Stomach (tissue), 19 donors: ENCODE measurements at regions of chr1 and their contacts with region 1.

Region 1: GRCh38 chr1:66452162-66452561 is 81.8 kb upstream of the SGIP1 start:
- DNase-seq: no peak
- H3K4me3 ChIP-seq: no peak overlapping the region
- H3K27ac ChIP-seq: no peak overlapping the region
- H3K4me1 ChIP-seq: peaks cover 0 to 21% (median 0%) of the 10 kb centered on the region in 4 donors
- H3K27me3 ChIP-seq: no peaks in the 10 kb centered on the region
- CTCF ChIP-seq: no peak
- EP300 ChIP-seq: no peak
- POLR2A ChIP-seq: no peak

Region 2: DNA sequence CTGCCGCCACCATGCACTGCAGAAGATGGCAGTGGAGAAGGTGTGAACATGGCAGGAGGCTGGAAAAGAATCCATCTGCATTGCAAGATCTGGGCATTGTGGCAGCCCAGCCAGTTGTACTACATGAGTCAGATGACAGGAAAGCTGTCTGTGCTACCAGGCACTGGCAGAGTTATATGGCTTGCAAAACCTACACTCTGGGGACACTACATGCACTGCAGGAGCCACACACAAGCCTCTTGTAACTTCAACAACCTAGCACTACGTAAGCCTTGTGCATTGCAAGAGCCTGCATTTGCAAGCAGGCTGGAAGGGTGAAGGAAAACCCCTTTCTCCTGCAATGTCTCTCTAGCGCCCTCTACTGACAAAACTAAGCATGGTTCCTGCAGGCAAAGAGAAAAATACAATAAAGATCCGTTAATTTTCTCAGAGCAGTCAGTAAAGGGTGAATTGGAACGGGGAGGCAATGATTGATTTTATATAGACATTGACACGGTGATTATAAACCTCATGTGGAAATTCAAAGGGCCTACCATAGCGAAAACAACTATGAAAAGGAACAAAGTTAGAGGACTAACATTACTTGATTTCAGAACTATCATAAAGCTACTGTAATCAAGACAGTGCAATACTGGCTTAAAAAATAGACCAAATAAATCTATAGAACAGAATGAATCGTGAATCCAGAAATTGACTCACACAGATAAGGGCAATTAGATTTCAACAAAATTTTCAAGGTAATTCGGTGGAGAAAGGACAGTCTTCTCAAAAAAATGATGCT is 273.9 kb after region 1 on chr1:
- intact Hi-C with region 1: loop called (anchors 10 kb)
- DNase-seq: peak; percentile 28 to 85
- H3K4me3 ChIP-seq: no peak overlapping the region
- H3K27ac ChIP-seq: no peak overlapping the region
- H3K4me1 ChIP-seq: peaks cover 0 to 3% (median 0%) of the 10 kb centered on the region in 4 donors
- H3K27me3 ChIP-seq: no peaks in the 10 kb centered on the region
- CTCF ChIP-seq: peak in 5 of 7 experiments; percentile 51 to 92 (median 78)
- EP300 ChIP-seq: no peak
- POLR2A ChIP-seq: no peak